GM12878 (cell line): ENCODE measurements at regions of chr21 and their contacts with region 1.

Region 1: GRCh38 chr21:32612075-32612998 is at the start of gene CFAP298:
- DNase-seq: peak; percentile 67
- ATAC-seq: peak; percentile 96
- H3K4me3 ChIP-seq: peak within 1 kb of the TSS; percentile 90
- H3K27ac ChIP-seq: peak within 1 kb of the TSS; percentile 39
- H3K4me1 ChIP-seq: no peaks in the 10 kb centered on the region
- H3K27me3 ChIP-seq: no peaks in the 10 kb centered on the region
- CTCF ChIP-seq: no peak
- EP300 ChIP-seq: peak in 1 of 2 experiments; percentile 11; a peak in 1 of 4 replicates
- POLR2A ChIP-seq: peak; percentile 57
- RAD21 ChIP-seq: no peak
- polyA plus RNA-seq, gene CFAP298: 9.5 to 19.5 TPM

Region 2: GRCh38 chr21:32562426-32562825 is 49.9 kb before region 1 on chr21:
- CTCF ChIA-PET with region 1: no interaction called
- POLR2A ChIA-PET with region 1: no interaction called
- RAD21 ChIA-PET with region 1: no interaction called
- SMC1A ChIA-PET with region 1: no interaction called
- in situ Hi-C with region 1: no loop called
- intact Hi-C with region 1: no loop called
- DNase-seq: no peak
- ATAC-seq: no peak
- H3K4me3 ChIP-seq: no peak overlapping the region
- H3K27ac ChIP-seq: no peak overlapping the region
- H3K4me1 ChIP-seq: no peaks in the 10 kb centered on the region
- H3K27me3 ChIP-seq: no peaks in the 10 kb centered on the region
- CTCF ChIP-seq: no peak
- EP300 ChIP-seq: no peak
- POLR2A ChIP-seq: no peak
- RAD21 ChIP-seq: no peak

Region 3: DNA sequence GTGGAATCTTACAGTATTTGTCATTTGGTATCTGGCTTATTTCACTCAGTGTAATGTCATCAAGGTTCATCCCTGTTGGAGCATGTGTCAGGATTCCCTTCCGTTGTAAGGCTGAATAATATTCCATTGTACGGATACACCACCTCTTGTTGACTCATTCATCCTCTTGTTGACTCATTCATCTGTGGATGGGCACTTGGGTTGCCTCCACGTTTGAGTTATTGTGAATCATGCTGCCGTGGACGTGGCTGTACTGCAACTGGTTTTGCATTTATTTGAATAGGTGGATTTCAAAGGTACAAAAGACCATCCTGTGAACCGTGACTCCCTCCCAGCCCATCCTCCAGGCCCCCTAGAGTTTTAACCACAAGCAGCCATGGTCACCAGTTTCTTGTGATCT is 15.1 kb before region 1 on chr21:
- CTCF ChIA-PET with region 1: interaction called, 50 read pairs
- POLR2A ChIA-PET with region 1: interaction called, 3 read pairs
- RAD21 ChIA-PET with region 1: interaction called, 9 read pairs
- SMC1A ChIA-PET with region 1: no interaction called
- in situ Hi-C with region 1: no loop called
- intact Hi-C with region 1: no loop called
- DNase-seq: no peak
- ATAC-seq: no peak
- H3K4me3 ChIP-seq: no peak overlapping the region
- H3K27ac ChIP-seq: no peak overlapping the region
- H3K4me1 ChIP-seq: no peaks in the 10 kb centered on the region
- H3K27me3 ChIP-seq: no peaks in the 10 kb centered on the region
- CTCF ChIP-seq: no peak
- EP300 ChIP-seq: no peak
- POLR2A ChIP-seq: no peak
- RAD21 ChIP-seq: no peak

Region 4: DNA sequence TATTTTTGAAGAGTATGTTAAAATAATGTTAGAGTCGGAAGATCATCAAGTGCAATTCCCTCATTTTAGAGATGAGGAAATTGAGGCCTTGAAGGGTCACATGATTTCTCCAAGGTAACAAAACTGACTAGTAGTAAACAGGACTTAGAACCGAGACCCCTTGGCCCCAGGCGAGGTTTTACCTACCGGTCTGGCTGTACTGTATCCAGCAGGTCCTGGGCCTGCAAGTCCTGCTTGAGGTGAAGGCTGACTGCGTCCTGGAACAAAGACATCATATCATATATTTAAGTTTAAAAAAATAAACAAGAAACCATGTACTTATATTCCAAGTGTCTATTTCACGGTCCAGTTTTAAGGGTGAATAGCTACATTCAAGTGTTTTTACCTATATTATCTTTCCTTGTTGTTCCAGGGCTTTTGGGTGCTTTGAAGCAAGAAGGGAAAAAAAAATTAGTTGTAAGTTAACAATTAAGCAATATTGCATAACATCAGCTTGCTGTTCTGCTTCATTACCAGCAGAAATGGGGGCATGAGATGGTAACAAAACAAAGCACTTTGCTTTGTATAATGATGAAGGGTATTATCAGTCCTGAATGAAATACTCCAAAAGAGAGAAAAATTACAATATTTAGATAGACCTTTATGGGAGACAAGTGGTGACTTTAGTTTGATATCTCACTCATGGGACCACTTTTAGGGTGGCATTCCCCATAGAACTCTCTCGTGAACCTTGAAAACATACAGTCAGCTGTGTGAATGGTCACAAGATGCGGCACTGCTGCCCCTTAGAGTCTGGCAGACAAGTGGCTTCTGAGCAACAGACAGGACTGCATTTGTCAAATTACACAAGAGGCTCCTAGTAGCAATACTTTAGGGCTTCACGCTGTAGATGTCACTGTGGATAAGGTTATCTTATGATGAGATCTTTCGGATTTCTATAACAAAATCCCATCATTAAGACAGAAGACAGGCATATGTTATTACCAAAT is 29.7 kb after region 1 on chr21:
- CTCF ChIA-PET with region 1: no interaction called
- POLR2A ChIA-PET with region 1: no interaction called
- RAD21 ChIA-PET with region 1: no interaction called
- SMC1A ChIA-PET with region 1: no interaction called
- in situ Hi-C with region 1: no loop called
- intact Hi-C with region 1: no loop called
- DNase-seq: no peak
- ATAC-seq: no peak
- H3K4me3 ChIP-seq: no peak overlapping the region
- H3K27ac ChIP-seq: no peak overlapping the region
- H3K4me1 ChIP-seq: no peaks in the 10 kb centered on the region
- H3K27me3 ChIP-seq: no peaks in the 10 kb centered on the region
- CTCF ChIP-seq: no peak
- EP300 ChIP-seq: no peak
- POLR2A ChIP-seq: no peak
- RAD21 ChIP-seq: no peak